ENCODE measurements at regions of chr20 and their contacts with region 1.

Region 1: DNA sequence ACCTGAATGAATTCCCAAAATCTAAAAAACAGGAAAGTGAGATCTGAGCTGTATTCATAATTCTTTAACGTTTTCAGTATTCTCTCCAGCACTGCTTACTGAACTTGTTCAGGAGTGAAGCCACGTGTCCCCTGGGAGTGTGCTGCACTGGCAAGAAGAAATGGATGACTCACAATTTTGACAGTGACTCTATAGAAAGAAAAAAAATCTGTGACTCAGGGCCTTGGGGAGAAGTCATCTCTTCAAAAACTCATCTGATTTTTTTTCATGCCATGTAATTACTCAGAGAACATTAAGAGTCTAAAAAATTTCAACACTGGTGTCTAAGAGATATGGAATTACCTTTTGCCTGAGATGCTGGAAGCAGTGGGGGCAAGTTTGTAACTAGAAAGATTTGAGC is 39.7 kb downstream of the ANKEF1 start:
- H3K4me3 Mint-ChIP-seq: no peak overlapping the region
- H3K27ac Mint-ChIP-seq: no peak overlapping the region
- H3K4me1 Mint-ChIP-seq: peaks cover 18% of the 10 kb centered on the region
- H3K27me3 Mint-ChIP-seq: peaks cover 10% of the 10 kb centered on the region

Region 2: DNA sequence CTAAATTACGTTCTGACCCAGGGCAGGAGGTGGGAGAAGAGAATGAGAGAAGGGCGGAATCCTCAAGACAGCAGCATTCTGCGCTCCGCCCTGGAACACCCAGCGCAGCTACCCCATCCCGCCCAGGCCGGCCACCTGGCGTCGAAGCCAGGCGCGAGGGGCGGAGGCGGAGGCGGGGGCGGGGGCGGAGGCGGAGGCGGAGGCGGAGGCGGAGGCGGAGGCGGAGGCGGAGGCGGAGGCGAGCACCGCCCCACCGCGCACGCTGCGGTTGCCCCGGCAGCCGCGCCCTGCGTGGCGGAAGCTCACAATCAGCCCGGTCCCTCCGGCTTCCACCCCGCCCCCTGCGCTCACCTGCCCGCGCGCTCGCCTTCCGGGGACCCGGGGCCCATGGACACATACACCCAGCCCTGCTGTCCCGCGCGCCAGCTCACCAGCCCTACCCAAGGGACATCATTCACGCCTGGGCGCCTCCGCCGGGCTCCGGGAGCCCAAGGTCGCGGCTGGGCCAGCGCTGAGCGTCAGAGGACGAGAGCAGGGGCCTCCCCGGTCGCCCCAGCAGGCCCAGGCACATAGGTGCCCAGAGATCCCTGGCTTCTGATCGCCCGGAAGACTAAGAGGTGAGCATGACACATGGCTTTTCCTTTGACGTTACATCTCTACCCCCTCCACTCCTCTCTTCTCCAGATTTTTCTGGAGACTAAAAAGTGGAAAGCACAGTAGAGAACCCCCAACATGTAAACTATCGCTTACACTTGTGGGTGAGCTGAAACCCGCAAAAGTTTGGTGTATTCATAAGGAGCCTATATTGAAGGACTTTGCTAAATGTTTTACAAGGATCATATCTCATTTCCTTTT is 39.6 kb before region 1 on chr20 and contains the start of gene ANKEF1:
- intact Hi-C with region 1: loop called (anchors 5 kb)
- H3K4me3 Mint-ChIP-seq: peak within 1 kb of the TSS; percentile 83
- H3K27ac Mint-ChIP-seq: peak within 1 kb of the TSS; percentile 76
- H3K4me1 Mint-ChIP-seq: peaks cover 23% of the 10 kb centered on the region
- H3K27me3 Mint-ChIP-seq: peaks cover 13% of the 10 kb centered on the region

Region 3: GRCh38 chr20:10185741-10186558 is 111.4 kb after region 1 on chr20:
- intact Hi-C with region 1: no loop called
- H3K4me3 Mint-ChIP-seq: no peak overlapping the region
- H3K27ac Mint-ChIP-seq: no peak overlapping the region
- H3K4me1 Mint-ChIP-seq: no peaks in the 10 kb centered on the region
- H3K27me3 Mint-ChIP-seq: no peaks in the 10 kb centered on the region

Measured in dendritic cell treated with granulocyte-macrophage colony-stimulating factor and Interleukin-4, amounts not matched to agents 40 ng/mL and 50 ng/mL, for 4 days (primary cell).